ENCODE measurements at regions of chr9 and their contacts with region 1.

Region 1: DNA sequence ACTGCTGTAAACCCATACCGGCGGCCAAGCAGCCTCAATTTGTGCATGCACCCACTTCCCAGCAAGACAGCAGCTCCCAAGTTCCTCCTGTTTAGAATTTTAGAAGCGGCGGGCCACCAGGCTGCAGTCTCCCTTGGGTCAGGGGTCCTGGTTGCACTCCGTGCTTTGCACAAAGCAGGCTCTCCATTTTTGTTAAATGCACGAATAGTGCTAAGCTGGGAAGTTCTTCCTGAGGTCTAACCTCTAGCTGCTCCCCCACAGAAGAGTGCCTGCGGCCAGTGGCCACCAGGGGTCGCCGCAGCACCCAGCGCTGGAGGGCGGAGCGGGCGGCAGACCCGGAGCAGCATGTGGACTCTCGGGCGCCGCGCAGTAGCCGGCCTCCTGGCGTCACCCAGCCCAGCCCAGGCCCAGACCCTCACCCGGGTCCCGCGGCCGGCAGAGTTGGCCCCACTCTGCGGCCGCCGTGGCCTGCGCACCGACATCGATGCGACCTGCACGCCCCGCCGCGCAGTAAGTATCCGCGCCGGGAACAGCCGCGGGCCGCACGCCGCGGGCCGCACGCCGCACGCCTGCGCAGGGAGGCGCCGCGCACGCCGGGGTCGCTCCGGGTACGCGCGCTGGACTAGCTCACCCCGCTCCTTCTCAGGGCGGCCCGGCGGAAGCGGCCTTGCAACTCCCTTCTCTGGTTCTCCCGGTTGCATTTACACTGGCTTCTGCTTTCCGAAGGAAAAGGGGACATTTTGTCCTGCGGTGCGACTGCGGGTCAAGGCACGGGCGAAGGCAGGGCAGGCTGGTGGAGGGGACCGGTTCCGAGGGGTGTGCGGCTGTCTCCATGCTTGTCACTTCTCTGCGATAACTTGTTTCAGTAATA is at the start of gene FXN:
- DNase-seq: no peak
- H3K4me3 ChIP-seq: peak within 1 kb of the TSS; percentile 89
- CTCF ChIP-seq: peak; percentile 99

Region 2: GRCh38 chr9:69023650-69024049 is 12.0 kb before region 1 on chr9:
- CTCF ChIA-PET with region 1: interaction called, 37 read pairs
- POLR2A ChIA-PET with region 1: no interaction called
- DNase-seq: no peak
- H3K4me3 ChIP-seq: no peak overlapping the region
- CTCF ChIP-seq: no peak

Measured in AG04449 (cell line).